ENCODE measurements at regions of chr12 and their contacts with region 1.

Region 1: DNA sequence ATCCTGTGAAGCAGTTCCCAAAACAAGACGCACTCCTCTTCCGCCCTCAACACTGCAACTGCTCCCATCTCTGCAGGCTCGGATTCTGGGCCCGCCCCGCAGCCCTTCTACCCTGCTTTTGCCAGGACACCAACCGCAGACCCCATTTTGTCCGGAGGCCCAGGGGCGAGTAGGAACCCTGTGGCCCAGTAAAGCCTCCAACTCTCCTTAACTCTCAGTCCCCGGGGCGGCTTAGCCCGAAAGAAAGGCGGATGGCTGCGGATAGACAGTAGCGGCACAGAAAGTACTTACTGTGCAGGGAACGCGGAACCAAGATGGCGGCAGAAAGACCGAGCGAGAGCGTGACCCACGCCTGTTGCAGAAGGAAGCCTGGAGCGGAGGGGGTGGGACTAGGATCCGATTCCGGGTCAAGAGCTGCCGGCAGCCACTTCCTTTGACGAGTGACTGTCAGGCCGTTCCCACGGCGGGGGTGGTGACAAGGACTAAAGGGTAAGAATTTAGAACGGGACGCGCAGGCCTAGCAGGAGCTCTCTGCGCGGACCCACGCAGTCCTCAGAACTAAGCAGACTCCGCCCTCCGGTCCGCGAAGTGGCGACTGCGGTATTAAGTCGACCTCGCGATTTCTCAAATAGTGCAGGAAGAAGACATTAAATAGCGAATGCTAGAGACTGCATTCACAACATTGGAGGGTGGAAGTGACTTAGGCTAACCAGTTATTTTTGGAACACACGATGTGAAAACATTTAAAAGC is at the start of gene NACA:
- DNase-seq: peak; percentile 99
- H3K4me3 ChIP-seq: peak within 1 kb of the TSS; percentile 86
- H3K27ac ChIP-seq: peak within 1 kb of the TSS; percentile 90
- H3K4me1 ChIP-seq: peaks cover 13% of the 10 kb centered on the region
- H3K27me3 ChIP-seq: no peaks in the 10 kb centered on the region
- CTCF ChIP-seq: no peak
- total RNA-seq, gene NACA: 622 to 763 TPM

Region 2: DNA sequence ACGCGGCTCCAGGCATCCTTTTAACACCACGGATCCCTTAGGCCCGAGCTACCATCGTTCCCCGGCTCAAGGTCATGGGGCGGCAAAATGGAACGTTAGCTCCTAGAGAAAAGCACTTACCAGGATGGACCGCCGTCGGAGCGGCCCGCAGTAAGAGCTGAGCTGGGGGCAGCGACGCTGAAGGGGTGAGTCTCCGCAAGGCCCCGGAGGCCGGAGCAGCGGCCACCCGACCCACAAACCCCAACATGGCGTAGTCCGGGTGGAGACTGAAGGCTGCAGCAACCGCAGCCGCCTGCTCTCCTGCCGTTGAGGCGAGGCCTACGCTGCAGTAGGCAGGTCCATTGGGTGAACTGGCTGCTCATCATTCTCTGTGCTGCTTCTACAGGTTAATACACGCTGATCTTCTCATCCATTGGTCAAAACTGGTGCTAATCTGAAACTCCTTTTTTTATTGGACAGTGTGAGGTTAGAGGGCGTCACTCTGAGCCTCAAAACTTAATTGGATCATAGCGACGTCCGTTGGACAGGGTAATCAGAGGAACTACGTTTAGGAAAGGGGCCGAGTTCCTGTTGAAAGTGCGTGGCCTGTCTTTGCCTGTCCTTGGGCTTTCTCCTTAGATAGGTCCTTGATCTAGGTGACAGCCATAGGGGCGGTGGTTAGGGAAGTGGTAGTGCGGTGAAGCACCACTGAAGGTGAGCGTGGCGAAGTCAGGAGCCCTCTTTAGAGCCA is 79.3 kb before region 1 on chr12 and contains the start of gene ATP5F1B:
- intact Hi-C with region 1: loop called (anchors 10 kb)
- DNase-seq: peak; percentile 97
- H3K4me3 ChIP-seq: peak within 1 kb of the TSS; percentile 89
- H3K27ac ChIP-seq: peak within 1 kb of the TSS; percentile 91
- H3K4me1 ChIP-seq: peaks cover 8% of the 10 kb centered on the region
- H3K27me3 ChIP-seq: no peaks in the 10 kb centered on the region
- CTCF ChIP-seq: no peak
- total RNA-seq, gene ATP5F1B: 1,505 to 1,554 TPM

Region 3: DNA sequence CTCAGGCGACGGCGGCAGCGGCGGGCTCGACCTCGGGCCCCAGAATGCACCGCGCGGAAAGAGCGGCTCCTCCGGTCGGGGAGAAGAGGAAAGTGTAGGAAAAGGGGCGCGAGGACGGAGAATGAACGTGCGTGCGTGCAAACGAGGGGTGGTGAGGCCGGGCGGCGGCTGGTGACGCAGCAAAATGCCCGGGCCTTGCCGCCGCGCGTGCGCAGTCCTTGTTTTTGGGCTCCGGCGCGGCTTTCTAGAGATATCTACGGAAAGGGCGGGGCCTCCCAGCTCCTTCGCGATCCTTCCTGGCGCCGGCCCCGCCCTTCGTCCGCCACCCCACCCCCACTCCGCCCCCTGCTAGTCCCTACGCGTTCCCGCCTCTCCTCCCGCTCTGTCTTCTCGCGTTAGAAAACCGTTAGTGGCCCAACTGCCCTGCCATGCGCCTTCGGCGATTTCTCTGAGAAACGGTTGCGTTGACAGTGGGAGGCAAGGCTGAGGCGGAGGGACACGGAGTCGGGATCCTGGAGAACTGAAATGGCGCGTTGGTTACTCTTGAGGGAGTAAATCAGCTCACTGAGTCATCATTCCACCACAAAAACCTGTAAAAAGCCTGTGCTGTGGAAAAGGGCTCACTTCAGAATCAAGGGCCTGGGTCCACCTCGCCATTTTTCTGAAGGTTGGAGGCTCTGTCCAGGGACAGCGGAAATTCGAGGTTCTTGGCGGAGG is 36.9 kb before region 1 on chr12 and contains the start of gene PTGES3:
- intact Hi-C with region 1: loop called (anchors 5 kb)
- DNase-seq: peak; percentile 97
- H3K4me3 ChIP-seq: peak within 1 kb of the TSS; percentile 87
- H3K27ac ChIP-seq: peak within 1 kb of the TSS; percentile 100
- H3K4me1 ChIP-seq: peaks cover under 1% of the 10 kb centered on the region
- H3K27me3 ChIP-seq: no peaks in the 10 kb centered on the region
- CTCF ChIP-seq: no peak
- total RNA-seq, gene PTGES3: 242 to 303 TPM

Measured in colonic mucosa (tissue), 4 donors.